ENCODE measurements at regions of chr5 and their contacts with region 1.

Region 1: DNA sequence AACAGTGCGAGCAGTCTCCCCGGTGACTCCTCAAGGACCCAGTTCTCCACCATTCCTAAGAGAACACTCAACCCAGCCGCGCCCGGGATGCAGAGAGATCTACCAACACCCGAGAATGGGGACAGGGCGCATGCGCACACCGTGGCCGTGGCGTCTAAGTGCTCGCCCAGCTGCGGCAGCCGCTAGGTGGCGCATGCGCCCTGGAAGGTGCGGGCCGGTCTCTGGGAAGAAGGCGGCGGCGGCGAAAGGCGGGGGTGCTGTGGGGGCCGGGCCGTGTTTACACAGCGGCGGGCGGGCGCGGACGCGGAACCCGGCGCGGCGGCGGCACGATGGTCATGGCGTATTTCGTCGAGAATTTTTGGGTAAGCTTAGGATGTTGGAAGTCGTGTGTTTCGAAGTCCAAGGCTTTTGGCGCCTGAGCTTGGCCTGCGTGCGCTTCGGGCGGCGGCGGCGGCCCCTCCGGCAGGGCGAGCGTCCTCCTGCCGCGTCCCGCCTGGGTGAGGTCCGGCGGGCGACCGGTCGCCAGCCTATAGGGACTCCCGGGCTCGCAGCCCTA is at the start of gene FCHO2:
- DNase-seq: peak; percentile 99 to 100 (median 100)
- ATAC-seq: peak; percentile 90 to 95 (median 92)
- H3K4me3 ChIP-seq: peak within 1 kb of the TSS; percentile 76 to 80 (median 76)
- H3K27ac ChIP-seq: peak within 1 kb of the TSS; percentile 92 to 97 (median 94)
- H3K4me1 ChIP-seq: peaks cover 0 to 14% (median 0%) of the 10 kb centered on the region in 4 donors
- H3K27me3 ChIP-seq: no peaks in the 10 kb centered on the region
- CTCF ChIP-seq: peak; percentile 65 to 95 (median 81)
- POLR2A ChIP-seq: peak; percentile 75
- total RNA-seq, gene FCHO2: 11.7 to 22.8 (median 14.8) TPM

Region 2: GRCh38 chr5:72860499-72860898 is 95.3 kb before region 1 on chr5:
- intact Hi-C with region 1: no loop called
- DNase-seq: no peak
- ATAC-seq: no peak
- H3K4me3 ChIP-seq: no peak overlapping the region
- H3K27ac ChIP-seq: no peak overlapping the region
- H3K4me1 ChIP-seq: no peaks in the 10 kb centered on the region
- H3K27me3 ChIP-seq: no peaks in the 10 kb centered on the region
- CTCF ChIP-seq: no peak
- POLR2A ChIP-seq: no peak

Region 3: DNA sequence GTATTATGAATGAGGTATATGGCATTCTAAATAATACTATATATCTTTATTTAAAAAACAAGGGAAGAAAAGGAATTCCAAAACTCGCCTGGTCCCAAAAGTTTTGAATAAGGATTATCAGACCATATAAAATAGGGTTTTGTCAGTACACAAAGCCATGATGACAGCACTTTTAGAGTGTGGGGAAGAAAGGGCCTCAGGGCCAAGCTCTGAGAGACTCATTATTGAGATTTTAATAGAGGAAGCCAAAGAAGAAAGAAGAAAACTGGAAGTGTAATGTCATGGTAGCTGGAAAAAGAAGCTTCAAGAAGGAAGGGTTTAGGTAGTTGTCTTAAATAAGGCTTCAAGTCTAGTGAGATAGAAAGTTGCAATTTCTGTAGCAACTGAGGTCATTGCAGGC is 53.0 kb after region 1 on chr5:
- intact Hi-C with region 1: no loop called
- DNase-seq: no peak
- ATAC-seq: peak in 1 of 4 donors; percentile 25
- H3K4me3 ChIP-seq: no peak overlapping the region
- H3K27ac ChIP-seq: no peak overlapping the region
- H3K4me1 ChIP-seq: no peaks in the 10 kb centered on the region
- H3K27me3 ChIP-seq: no peaks in the 10 kb centered on the region
- CTCF ChIP-seq: no peak
- POLR2A ChIP-seq: no peak

Region 4: GRCh38 chr5:73027361-73027760 is 71.5 kb after region 1 on chr5:
- intact Hi-C with region 1: loop called in 1 of 2 experiments (anchors 5 kb)
- DNase-seq: no peak
- ATAC-seq: no peak
- H3K4me3 ChIP-seq: no peak overlapping the region
- H3K27ac ChIP-seq: no peak overlapping the region
- H3K4me1 ChIP-seq: peaks cover 0 to 7% (median 2%) of the 10 kb centered on the region in 4 donors
- H3K27me3 ChIP-seq: no peaks in the 10 kb centered on the region
- CTCF ChIP-seq: peak; percentile 7 to 19 (median 11)
- POLR2A ChIP-seq: no peak